ENCODE measurements at regions of chr2 and their contacts with region 1.

Region 1: DNA sequence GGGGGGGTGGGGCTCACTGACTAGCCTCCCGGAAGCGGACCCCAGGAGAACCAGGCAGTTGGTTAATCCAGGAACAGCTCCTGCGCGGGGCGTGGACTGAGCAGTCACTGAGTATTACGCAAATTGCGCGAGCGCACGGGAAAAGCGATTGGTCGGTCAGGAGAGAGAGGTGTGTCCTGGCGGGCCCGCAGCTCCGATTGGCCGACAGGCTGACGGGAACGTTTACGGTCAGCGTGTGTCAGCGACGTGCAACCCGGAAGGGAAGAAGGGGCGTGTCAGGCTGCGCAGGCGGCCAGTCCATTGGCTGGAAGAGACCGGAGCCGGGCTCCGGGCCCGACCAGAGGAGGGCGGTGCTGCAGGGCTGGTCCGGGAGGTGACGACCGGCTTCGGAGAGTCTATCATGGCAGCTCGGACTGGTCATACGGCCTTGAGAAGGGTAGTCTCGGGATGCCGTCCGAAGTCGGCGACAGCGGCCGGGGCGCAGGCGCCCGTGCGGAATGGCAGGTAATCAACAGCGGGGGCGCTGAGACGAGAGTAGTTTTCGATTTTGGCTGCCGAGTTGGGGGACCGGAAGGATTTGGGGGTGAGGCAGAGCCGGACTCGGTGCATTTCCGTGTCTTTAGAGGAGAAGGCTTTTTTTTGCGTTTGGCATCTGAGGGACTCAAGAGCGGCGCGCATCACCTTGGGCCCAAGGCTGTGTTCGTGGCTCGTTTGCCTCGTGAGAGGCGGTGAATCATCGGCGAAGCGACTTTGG is at the start of gene COQ10B:
- DNase-seq: peak; percentile 98 to 100 (median 100)

Region 2: DNA sequence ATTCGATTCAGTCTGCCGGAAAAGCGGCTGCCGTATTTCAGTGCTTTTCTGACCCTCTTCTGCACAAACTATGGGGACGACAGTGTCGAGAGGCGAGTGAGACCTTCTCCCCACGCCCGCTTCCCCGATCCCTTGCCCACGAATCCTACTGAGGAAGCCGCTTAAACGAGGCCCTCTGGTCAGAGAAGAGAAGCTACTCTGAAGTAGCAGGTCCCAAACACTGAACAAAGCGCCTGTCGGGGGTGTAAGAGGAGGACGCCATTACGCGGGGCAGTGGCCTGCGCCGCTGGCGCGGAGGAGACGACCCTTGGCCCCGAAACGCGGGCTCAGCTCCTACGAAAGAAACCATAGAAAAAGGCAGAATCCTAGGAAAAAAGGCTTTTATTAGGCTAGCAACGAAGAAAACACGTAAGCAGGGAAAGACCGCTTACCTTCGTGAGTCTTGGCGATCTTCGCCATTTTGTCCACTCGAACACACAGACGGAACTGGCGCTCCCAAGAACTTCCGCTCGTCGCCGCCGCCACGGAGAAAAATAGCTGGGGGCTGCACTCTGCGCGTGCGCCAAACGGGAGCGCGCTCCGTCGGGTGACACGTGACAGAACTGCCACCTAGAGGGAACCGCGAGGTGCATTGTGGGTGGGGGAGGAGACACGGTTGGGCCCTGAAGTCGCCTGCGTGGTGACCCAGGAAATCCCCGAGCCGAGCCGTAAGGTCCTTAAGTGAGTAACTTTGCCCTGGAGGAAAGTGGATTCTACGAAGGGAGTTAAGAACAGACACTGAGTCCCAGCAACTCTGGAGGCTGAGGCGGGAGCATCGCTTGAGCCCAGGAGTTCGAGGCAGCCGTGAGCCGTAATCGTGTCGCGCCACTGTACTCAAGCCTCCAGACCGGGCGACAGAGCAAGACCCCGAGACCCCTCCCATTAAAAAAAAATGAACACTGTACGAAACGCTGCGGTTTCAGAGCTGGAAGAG is 18.5 kb before region 1 on chr2 and contains the start of gene SF3B1:
- intact Hi-C with region 1: loop called (anchors 1 kb)
- DNase-seq: peak; percentile 93 to 99 (median 98)

Region 3: GRCh38 chr2:197487385-197487784 is 34.0 kb after region 1 on chr2:
- intact Hi-C with region 1: no loop called
- DNase-seq: no peak

Region 4: DNA sequence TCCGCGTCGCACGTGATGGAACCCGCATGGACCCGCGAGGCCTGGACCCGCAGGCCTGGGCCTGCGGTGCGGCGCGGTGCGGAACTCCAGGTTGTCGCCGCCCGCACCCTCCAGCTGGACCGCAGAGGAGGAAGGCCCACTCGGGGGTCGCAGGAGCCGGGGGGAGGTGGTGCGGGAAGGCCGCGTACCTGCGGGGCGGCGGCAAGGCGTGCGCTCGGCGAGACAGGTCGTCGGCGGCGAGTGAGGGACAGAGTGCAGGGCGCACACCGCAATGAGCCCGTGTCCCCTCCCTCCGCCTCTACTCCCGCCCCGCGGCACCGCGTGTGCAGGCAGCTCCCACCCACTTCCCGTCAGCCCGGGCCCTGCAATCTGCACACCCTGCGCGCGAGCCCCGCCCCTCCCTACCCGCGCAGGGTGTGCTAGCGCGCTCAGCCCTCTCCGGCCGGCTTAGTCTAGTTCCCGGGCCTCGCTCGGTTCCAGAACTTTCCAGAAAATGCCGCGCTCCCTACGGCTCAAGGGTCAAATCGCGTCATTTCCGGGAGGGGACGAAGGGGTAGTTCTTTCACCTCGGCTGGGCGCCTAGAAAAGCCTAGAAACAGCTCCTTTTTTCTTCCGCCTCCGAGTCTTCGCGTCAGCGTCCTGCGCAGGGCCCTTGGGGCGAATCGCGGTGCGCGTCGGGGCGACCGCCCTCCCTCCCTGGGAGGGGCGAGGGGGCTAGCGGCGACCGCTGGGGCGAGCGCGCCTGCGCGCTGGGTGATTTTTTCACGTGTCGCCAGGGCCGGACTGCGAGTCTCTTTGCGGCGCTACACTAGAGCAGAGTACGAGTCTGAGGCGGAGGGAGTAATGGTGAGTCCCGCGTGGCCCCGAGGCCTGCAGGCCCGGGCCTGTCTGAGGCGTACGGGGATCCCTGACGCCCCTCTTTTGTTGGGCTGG is 46.5 kb after region 1 on chr2 and contains the starts of genes HSPD1 and HSPE1:
- intact Hi-C with region 1: loop called (anchors 5 kb)
- DNase-seq: peak; percentile 93 to 100 (median 98)

Measured in posterior cingulate gyrus (tissue), 11 donors.